Activated naive CD4-positive, alpha-beta T cell treated with anti-CD3 and anti-CD28 coated beads for 36 hours (primary cell): ENCODE measurements at regions of chr1 and their contacts with region 1.

Region 1: GRCh38 chr1:206912445-206913095 is 9.2 kb downstream of the FCMR start:
- DNase-seq: peak; percentile 81
- H3K4me3 Mint-ChIP-seq: no peak overlapping the region
- H3K27ac Mint-ChIP-seq: peak overlapping the region; percentile 47
- H3K4me1 Mint-ChIP-seq: peaks cover 84% of the 10 kb centered on the region
- H3K27me3 Mint-ChIP-seq: no peaks in the 10 kb centered on the region

Region 2: GRCh38 chr1:206469933-206470691 is 442.5 kb before region 1 on chr1 and contains the start of gene IKBKE:
- CTCF ChIA-PET with region 1: no interaction called
- intact Hi-C with region 1: loop called (anchors 5 kb)
- DNase-seq: peak; percentile 66
- H3K4me3 Mint-ChIP-seq: peak within 1 kb of the TSS; percentile 80
- H3K27ac Mint-ChIP-seq: peak within 1 kb of the TSS; percentile 89
- H3K4me1 Mint-ChIP-seq: peaks cover 89% of the 10 kb centered on the region
- H3K27me3 Mint-ChIP-seq: no peaks in the 10 kb centered on the region
- total RNA-seq, gene IKBKE: 7.0 to 8.6 TPM

Region 3: DNA sequence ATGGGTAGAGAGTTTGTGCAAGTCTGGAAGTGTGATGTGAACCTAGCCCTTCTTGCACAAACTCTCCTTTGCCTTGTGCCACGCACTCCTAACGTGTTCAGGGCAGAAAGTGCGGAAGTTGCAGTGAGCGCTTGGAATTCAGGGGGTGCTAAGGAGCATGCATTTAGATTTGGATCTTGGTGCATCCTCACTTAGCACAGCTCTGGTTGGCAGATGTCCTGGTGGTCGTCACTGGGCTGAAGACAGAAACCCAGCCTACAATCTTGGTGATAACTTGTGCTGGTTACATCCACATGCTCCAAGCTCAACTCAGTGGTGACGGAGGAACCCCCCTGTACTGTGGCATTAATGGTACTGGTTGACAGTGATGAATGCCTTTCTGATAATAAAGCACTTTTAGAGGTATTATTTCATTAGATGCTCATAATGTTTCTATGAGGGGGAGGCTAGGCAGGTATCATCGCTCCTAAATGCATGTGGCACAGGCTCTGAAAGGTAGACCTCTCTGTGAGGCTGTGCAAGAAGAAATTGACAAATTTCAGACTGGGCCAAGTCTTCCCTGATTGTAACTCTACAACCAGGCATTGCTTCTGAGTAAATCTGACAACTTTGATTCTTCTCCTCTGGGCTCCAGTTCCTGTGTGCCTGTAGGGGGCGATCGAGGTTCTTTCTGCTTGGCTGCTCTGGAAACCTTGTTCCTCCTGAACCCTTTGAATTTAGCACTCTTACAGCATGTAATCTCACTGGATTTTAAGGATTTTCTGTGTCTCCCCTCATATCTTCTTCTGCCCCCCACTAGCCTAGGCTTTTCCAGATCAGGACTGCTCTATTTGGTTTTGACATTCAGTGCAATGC is 187.2 kb before region 1 on chr1:
- CTCF ChIA-PET with region 1: interaction called, 48 read pairs
- intact Hi-C with region 1: loop called (anchors 1 kb)
- DNase-seq: peak; percentile 84
- H3K4me3 Mint-ChIP-seq: no peak overlapping the region
- H3K27ac Mint-ChIP-seq: no peak overlapping the region
- H3K4me1 Mint-ChIP-seq: peaks cover 39% of the 10 kb centered on the region
- H3K27me3 Mint-ChIP-seq: no peaks in the 10 kb centered on the region

Region 4: DNA sequence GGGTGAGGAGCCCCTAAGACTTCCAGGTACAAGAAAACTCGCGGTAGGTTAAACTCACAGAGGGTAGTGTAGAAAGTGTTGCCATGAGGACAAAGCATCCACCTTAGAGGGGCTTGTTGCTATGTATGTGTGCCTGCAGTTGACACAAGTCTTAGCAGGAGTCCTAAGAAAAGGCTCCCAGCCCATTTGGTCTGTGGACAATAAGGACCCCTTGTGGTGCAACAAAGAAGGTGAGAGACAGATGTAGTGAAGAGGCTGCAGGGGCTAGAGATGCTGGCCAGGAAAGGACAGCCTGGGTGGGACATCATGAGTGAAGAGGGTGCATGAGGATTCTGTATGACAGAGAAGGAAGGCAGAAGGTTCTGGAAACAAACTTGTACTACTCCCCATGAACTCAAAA is 104.0 kb before region 1 on chr1:
- CTCF ChIA-PET with region 1: interaction called, 157 read pairs
- intact Hi-C with region 1: loop called (anchors 1 kb)
- DNase-seq: peak; percentile 70
- H3K4me3 Mint-ChIP-seq: no peak overlapping the region
- H3K27ac Mint-ChIP-seq: no peak overlapping the region
- H3K4me1 Mint-ChIP-seq: peaks cover 42% of the 10 kb centered on the region
- H3K27me3 Mint-ChIP-seq: no peaks in the 10 kb centered on the region

Region 5: DNA sequence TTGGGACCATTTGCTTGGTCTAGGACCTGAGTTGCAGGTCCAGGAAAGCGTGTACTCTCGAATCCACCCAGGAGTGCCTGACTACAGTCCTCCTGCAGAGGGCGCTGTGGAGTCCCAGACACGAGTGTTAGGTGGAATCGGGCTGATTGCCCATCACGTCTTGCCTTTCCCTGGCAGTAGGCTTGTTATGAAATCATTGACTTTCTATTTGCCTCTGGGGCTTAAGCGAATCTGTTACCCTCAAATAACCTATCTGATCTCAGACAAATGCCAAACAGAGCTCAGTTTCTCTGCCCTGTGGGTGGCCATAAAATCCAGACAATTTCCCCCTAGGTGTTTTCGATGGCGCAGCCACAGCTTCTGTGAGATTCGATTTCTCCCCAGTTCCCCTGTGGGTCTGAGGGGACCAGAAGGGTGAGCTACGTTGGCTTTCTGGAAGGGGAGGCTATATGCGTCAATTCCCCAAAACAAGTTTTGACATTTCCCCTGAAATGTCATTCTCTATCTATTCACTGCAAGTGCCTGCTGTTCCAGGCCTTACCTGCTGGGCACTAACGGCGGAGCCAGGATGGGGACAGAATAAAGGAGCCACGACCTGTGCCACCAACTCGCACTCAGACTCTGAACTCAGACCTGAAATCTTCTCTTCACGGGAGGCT is 47.4 kb before region 1 on chr1 and contains the start of gene IL20:
- CTCF ChIA-PET with region 1: interaction called, 66 read pairs
- intact Hi-C with region 1: loop called (anchors 1 kb)
- DNase-seq: peak; percentile 98
- H3K4me3 Mint-ChIP-seq: no peak within 1 kb of the TSS
- H3K27ac Mint-ChIP-seq: no peak within 1 kb of the TSS
- H3K4me1 Mint-ChIP-seq: peaks cover 30% of the 10 kb centered on the region
- H3K27me3 Mint-ChIP-seq: no peaks in the 10 kb centered on the region
- total RNA-seq, gene IL20: 0.31 TPM in 1 of 2 experiments, not detected in the other

Region 6: GRCh38 chr1:206895830-206896242 is 16.7 kb before region 1 on chr1:
- CTCF ChIA-PET with region 1: interaction called, 17 read pairs
- intact Hi-C with region 1: loop called (anchors 1 kb)
- DNase-seq: no peak
- H3K4me3 Mint-ChIP-seq: no peak overlapping the region
- H3K27ac Mint-ChIP-seq: peak overlapping the region; percentile 22
- H3K4me1 Mint-ChIP-seq: peaks cover 92% of the 10 kb centered on the region
- H3K27me3 Mint-ChIP-seq: no peaks in the 10 kb centered on the region

Region 7: DNA sequence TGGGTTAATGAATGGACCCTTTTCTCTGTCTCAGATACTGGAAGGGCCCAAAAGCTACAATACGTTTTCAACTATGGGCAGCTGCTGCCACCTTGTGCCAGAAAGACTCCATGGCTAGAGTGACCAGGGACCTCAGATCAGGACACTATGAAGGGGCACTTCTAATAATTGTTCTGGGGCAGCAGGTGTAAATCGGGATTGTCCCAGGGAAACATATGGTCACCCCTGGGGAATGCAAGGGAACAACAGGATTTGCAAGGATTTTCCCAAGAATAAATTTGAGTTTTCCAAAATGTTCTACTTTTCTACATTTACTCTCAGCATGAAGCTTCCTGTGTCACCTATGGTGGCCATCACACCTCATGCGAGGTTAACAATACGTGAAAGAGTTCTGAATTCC is 69.6 kb after region 1 on chr1:
- CTCF ChIA-PET with region 1: interaction called, 59 read pairs
- intact Hi-C with region 1: loop called (anchors 1 kb)
- DNase-seq: peak; percentile 78
- H3K4me3 Mint-ChIP-seq: no peak overlapping the region
- H3K27ac Mint-ChIP-seq: no peak overlapping the region
- H3K4me1 Mint-ChIP-seq: no peaks in the 10 kb centered on the region
- H3K27me3 Mint-ChIP-seq: no peaks in the 10 kb centered on the region